ENCODE measurements at regions of chr11 and their contacts with region 1.

Region 1: DNA sequence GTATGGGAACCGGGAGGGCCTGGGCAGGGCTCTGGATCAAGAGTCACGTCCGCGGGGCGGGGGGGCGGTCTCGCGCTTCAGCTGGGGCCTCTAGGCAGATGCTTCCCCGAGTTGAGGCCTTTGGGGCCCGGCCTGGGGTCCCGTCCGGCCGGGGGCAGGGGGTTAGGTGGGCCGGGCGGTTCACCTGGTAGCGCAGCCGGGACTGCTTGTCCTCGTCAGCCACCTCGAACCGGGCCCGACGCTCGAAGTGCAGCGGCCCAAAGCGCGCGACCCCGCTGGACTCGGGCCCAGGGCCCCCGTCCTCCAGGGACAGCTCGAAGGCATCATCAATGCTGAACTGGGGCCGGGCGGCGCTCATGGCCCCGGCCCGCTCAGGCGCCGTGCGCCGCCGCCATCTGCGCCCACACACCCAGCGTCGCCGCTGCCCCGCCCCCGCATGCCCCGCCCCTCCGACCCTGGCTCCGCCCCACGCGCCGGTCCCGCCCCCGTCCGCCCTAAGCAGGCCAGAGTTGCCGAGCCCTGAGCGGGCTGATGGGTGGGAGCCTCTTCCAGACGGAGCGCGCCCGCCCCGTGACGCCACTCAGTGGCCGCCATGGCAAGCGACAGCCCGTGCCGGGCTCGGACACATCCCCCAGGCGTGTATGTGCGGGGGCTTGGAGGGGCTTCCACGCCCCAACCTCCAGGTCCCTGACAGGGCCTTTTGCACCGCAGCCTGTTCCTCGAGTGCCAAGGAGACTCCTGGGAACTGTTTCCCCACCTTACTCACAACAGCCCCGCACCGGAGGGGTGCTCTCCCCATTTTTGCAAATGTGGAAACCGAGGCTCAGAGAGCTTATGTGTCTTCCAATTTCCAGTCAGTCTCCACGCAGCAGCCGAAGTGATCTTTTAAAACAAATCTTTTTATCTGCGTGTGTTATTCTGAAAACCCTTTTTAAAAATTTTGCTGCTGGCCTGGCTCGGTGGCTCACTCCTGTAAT is at the start of gene TMEM134:
- DNase-seq: no peak
- H3K4me3 ChIP-seq: peak within 1 kb of the TSS; percentile 67 to 87
- H3K27ac ChIP-seq: peak within 1 kb of the TSS; percentile 78
- H3K4me1 ChIP-seq: peaks cover 48% of the 10 kb centered on the region
- H3K27me3 ChIP-seq: no peaks in the 10 kb centered on the region
- CTCF ChIP-seq: peak in 1 of 3 experiments; percentile 34
- POLR2A ChIP-seq: peak in 1 of 2 donors; percentile 52
- total RNA-seq, gene TMEM134: 88.6 TPM

Region 2: DNA sequence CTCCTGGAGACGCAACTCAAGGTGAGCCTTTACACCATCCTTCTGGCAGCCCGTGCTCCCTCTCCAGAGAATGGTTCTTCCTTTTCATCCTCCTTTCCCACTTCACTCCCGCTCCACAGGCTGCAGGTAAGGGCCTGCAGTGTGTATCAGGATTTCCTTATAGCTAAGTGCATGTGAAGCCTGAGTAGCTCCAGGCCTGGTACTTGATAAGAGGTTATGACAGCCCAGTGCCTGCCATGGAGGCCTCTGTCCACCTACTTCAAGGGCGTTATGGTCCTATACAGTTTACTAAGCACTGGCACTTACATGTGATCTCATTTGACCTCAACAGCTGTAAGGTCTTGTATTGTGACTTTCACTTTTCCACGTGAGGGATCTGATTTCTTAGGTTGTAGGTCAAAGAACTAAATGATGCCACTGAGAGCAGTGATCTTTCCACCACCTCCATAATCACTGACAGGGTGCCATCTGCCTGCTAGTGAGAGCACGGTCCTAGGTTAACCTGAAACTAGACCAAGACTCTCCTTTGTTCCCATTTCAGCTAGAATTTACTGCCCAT is 147.7 kb before region 1 on chr11:
- intact Hi-C with region 1: no loop called
- DNase-seq: no peak
- H3K4me3 ChIP-seq: no peak overlapping the region
- H3K27ac ChIP-seq: no peak overlapping the region
- H3K4me1 ChIP-seq: peaks cover 26% of the 10 kb centered on the region
- H3K27me3 ChIP-seq: no peaks in the 10 kb centered on the region
- CTCF ChIP-seq: no peak
- POLR2A ChIP-seq: no peak

Region 3: DNA sequence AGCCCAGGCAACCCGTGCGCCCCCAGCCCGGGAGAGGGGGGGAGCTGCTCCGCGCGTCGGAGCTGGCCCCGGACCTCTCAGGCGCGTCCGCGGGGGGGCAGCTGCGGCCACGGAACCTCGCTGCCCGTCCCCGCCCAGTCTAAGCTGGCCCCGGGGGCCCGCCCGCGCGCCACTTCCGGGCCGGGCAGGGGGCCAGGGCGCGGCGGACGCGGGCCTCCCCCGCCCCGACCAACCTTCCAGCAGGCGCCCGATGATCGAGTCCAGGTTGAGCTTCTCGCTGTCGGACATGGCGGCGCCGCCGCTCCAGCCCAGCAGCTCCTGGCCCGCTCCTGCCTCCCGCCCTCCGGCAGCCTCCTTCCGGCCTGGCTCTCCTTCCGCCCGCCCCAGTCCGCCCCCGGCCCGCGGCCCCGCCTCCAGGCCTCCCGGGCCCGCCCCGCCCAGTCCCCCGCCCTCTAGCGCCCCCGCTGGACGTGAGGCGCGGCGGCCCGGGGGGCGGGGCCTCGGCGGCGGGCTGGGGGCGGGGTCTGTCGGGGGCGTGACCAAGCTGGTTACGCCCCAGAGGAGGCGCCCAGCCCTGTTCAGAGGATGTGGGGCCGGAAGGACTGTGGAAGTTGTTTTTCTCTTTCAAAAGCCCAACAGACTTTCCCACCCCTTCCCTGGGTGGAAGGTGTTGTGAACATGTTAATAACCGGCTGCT is 67.5 kb before region 1 on chr11 and contains the start of gene PPP1CA:
- intact Hi-C with region 1: loop called (anchors 10 kb)
- DNase-seq: no peak
- H3K4me3 ChIP-seq: peak within 1 kb of the TSS; percentile 80 to 91
- H3K27ac ChIP-seq: peak within 1 kb of the TSS; percentile 94
- H3K4me1 ChIP-seq: peaks cover 49% of the 10 kb centered on the region
- H3K27me3 ChIP-seq: no peaks in the 10 kb centered on the region
- CTCF ChIP-seq: no peak
- POLR2A ChIP-seq: peak in 1 of 2 donors; percentile 55
- total RNA-seq, gene PPP1CA: 102 TPM

Region 4: DNA sequence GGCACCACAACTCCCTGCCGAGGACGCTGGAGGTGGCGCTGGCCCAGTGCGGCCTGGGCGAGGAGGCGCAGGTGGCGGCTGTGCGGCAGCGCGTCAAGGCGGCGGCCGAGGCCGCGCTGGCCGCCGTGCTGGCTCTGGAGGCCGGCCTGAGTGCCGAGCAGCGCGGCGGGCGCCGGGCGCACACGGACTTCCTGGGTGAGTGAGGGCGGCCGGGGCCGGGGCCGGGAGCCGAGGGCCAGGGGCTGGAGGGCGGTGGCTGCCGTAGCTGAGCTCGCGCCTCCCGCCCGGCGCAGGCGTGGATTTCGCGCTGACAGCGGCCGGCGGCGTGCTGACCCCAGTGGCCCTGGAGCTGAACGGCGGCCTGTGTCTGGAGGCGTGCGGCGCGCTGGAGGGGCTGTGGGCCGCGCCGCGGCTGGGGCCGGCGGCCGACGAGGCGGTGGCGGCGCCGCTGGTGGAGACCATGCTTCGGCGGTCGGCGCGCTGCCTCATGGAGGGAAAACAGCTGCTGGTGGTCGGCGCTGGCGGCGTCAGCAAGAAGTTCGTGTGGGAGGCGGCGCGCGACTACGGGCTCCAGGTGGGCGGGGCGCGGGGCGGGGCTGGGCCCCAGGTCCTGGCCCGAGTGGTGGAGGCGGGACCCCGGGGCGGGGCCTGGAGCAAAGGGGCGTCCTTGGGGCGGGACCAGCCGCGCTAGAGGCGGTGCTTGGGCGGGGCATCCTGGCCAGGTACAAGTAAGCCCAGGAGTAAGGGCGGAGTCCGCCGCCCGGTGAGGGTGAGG is 48.3 kb before region 1 on chr11:
- intact Hi-C with region 1: loop called (anchors 5 kb)
- DNase-seq: peak; percentile 95 to 99
- H3K4me3 ChIP-seq: peak overlapping the region; percentile 59 to 83
- H3K27ac ChIP-seq: peak overlapping the region; percentile 76
- H3K4me1 ChIP-seq: peaks cover 50% of the 10 kb centered on the region
- H3K27me3 ChIP-seq: no peaks in the 10 kb centered on the region
- CTCF ChIP-seq: no peak
- POLR2A ChIP-seq: peak in 1 of 2 donors; percentile 62

Region 5: DNA sequence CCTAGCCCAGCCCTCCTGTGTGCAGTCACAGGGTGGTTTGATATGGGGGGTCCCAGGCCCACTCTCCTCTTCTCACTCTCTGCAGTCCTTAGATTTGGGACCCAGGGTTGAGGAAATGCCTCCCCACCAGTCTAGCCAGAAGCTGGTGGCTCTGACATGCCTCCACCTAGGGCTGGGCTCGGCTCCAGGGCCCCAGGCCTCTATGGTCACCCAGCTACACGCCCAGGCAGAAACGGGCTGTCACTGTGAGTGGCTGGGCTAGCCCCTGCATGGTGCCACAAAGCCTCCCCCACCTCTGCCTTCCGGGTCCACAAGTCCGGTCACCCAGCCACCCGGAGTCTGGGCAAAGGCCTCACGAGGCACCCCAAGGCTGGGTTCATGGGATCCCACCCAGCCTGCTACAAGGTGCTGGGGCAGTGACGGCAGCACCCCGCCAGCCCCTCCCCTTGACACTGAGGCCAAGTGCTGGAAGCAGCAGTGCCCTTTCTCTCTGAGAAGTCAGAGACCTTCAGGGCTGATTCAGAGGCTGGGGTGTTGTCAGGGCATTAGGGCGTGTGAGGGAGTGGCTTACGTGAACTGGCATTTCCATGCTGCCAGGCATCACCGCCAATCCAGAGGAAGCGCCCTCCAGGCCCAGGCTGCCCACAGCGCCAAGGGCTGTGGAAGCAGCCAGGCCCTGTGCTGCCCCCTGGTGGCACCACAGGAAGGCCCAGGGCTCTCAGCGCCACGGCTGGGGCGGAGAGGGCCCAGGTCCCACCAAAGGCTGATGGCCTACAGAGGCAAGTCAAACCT is 36.7 kb after region 1 on chr11:
- intact Hi-C with region 1: no loop called
- DNase-seq: peak in 1 of 2 donors; percentile 96
- H3K4me3 ChIP-seq: peak overlapping the region; percentile 57 to 72
- H3K27ac ChIP-seq: peak overlapping the region; percentile 94
- H3K4me1 ChIP-seq: peaks cover 38% of the 10 kb centered on the region
- H3K27me3 ChIP-seq: no peaks in the 10 kb centered on the region
- CTCF ChIP-seq: peak; percentile 91 to 96 (median 92)
- POLR2A ChIP-seq: no peak

Region 6: DNA sequence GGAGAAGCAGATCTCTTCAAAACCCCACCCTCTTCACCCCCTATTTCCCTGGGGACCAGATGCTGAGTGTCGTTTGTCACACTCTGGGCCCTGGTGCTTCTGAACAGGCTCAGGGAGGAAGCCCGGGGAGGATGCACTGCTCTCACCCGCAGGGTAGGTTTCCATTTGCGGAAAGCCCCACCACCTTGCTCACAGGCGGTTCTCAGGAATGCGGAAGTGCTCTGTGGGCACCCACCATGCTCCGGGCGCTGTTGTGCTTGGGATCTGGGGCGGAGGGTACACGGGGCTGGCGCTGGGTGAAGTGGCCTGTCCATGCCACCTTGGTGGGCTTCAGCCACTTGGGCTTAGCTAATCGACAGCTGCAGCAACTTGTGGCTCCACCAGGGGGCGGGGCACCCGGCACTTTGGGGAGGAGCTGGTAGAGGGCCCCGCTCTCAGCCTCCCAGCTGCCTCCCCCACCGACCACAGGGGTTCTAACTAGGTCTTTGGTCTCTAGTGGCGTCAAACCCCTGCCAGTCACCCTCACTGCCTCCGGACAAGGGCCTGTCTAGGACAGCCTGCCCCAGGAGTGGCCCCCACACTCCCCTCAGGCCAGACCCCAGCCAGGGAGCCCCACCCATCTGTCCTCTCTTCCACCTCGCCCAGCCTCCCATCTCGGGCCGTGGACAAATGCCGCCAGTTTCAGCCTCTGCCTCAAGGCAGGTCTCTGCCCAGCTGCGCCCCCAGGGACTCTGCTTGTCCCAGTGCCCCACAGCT is 145.0 kb after region 1 on chr11:
- intact Hi-C with region 1: no loop called
- DNase-seq: peak in 1 of 2 donors; percentile 94
- H3K4me3 ChIP-seq: peak overlapping the region; percentile 28 to 48
- H3K27ac ChIP-seq: peak overlapping the region; percentile 58
- H3K4me1 ChIP-seq: peaks cover 15% of the 10 kb centered on the region
- H3K27me3 ChIP-seq: no peaks in the 10 kb centered on the region
- CTCF ChIP-seq: peak; percentile 34 to 56 (median 52)
- POLR2A ChIP-seq: no peak

Measured in vagina (tissue), 2 donors.